Sigmoid colon (tissue), 7 donors: ENCODE measurements at regions of chr7 and their contacts with region 1.

Region 1: GRCh38 chr7:39623018-39623731 is at the start of gene RALA:
- DNase-seq: peak; percentile 96
- H3K4me3 ChIP-seq: peak within 1 kb of the TSS; percentile 77 to 96 (median 89)
- H3K27ac ChIP-seq: peak within 1 kb of the TSS; percentile 84 to 90 (median 88)
- H3K4me1 ChIP-seq: peaks cover 0 to 39% (median 29%) of the 10 kb centered on the region in 4 donors
- H3K27me3 ChIP-seq: no peaks in the 10 kb centered on the region
- CTCF ChIP-seq: no peak
- EP300 ChIP-seq: no peak
- POLR2A ChIP-seq: peak; percentile 62 to 67
- total RNA-seq, gene RALA: 11.5 to 19.6 (median 15.5) TPM

Region 2: GRCh38 chr7:39656415-39656814 is 33.2 kb after region 1 on chr7:
- intact Hi-C with region 1: no loop called
- DNase-seq: no peak
- H3K4me3 ChIP-seq: no peak overlapping the region
- H3K27ac ChIP-seq: no peak overlapping the region
- H3K4me1 ChIP-seq: peaks cover 0 to 9% (median under 1%) of the 10 kb centered on the region in 4 donors
- H3K27me3 ChIP-seq: no peaks in the 10 kb centered on the region
- CTCF ChIP-seq: no peak
- EP300 ChIP-seq: no peak
- POLR2A ChIP-seq: no peak

Region 3: DNA sequence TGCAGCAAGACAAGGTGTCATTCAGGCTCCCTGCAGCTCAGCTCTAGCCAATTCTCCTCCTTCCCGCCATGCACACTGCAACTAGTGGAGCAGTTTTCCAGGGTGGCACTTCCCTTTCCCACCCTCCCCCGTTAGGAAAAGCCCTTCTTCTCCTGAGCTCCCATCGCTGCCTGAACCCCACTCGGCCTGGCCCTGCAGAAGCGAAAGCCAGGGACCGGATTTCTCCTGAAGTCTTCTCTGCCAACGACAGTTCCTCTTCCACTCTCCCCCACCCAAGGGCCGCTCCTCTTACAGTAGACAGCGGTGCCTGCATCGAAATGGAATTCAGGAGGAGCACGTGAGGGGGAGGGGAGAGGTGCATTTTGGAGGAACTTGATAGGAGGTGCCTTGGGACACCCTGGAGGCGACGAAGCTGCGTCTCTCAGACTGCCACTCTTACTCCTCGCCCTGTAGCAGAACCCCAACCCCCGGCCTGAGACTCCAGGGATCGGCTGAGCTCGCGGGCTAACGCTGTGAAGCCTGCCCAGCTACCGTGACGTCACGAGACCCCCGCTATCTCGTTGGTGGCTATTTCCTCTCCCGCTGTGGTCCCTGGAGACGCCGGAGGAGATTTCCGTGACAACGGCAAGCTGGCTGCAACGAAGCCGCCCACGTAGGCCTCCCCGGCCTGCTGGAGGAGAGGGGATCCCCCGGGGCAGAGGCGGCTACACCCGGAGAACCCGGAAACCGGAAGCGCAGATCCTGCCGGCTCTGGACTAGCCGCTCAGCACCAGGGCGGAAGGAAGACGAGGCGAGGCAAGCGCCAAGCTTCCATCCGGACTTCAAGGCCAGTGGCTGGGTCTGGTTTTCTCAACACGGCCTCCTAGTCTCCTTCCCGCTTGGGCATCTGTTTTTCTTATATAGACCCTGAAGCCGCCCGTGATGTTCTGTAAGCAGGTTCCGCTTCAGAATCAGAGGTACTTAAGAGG is 109.9 kb after region 1 on chr7:
- intact Hi-C with region 1: loop called (anchors 2 kb)
- DNase-seq: peak; percentile 97
- H3K4me3 ChIP-seq: peak overlapping the region; percentile 51 to 62 (median 58)
- H3K27ac ChIP-seq: peak overlapping the region; percentile 71 to 78 (median 74)
- H3K4me1 ChIP-seq: peaks cover 0 to 23% (median 13%) of the 10 kb centered on the region in 4 donors
- H3K27me3 ChIP-seq: no peaks in the 10 kb centered on the region
- CTCF ChIP-seq: no peak
- EP300 ChIP-seq: no peak
- POLR2A ChIP-seq: no peak